ENCODE measurements at regions of chr9 and their contacts with region 1.

Region 1: GRCh38 chr9:104927912-104928740 is at the start of gene ABCA1:
- DNase-seq: peak; percentile 77
- H3K4me3 ChIP-seq: peak within 1 kb of the TSS; percentile 96
- H3K27ac ChIP-seq: peak within 1 kb of the TSS; percentile 84
- H3K4me1 ChIP-seq: peaks cover 28% of the 10 kb centered on the region
- H3K27me3 ChIP-seq: no peaks in the 10 kb centered on the region
- CTCF ChIP-seq: no peak
- total RNA-seq, gene ABCA1: 22.4 and 38.3 TPM in 2 replicates

Region 2: GRCh38 chr9:103894184-103894583 is 1033.9 kb before region 1 on chr9:
- CTCF ChIA-PET with region 1: no interaction called
- POLR2A ChIA-PET with region 1: interaction called, 11 read pairs
- intact Hi-C with region 1: no loop called
- DNase-seq: no peak
- H3K4me3 ChIP-seq: no peak overlapping the region
- H3K27ac ChIP-seq: no peak overlapping the region
- H3K4me1 ChIP-seq: no peaks in the 10 kb centered on the region
- H3K27me3 ChIP-seq: no peaks in the 10 kb centered on the region
- CTCF ChIP-seq: no peak

Region 3: DNA sequence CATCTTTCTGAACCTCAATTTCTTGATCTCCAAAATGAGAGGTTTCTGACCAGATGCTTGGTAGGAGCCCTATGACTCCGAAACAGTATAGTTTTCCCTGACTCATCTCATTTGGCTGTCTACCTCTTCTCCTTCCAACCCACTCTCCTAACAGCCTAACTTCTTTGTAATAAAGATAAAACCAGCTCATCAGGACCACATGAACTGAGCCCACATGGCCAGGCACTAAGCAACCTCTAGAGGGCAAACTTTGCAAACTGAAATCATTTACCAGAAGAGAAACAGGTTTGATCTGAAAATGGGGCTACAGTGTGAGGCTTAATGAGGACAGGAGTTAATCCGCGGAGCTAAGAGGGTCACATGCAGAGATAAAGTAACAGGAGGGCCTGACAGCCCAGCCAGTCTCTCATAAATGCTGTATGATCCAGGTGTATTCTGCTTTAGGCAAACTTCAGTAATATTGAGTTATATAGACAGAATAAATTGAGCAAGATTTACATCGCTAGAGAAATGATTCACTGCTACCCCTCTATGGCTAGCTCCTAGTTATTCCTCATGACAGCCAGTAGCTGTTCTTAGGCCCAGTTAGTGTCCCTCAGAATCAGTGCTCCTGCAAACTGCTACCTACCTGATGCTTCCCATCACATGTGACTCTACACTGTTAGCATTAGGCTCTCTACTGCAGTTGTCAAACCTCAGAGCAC is 64.8 kb before region 1 on chr9:
- CTCF ChIA-PET with region 1: interaction called, 7 read pairs
- POLR2A ChIA-PET with region 1: no interaction called
- intact Hi-C with region 1: loop called (anchors 1 kb)
- DNase-seq: peak; percentile 56
- H3K4me3 ChIP-seq: no peak overlapping the region
- H3K27ac ChIP-seq: peak overlapping the region; percentile 21; the same call in 1 of the 2 replicates
- H3K4me1 ChIP-seq: peaks cover 50% of the 10 kb centered on the region
- H3K27me3 ChIP-seq: no peaks in the 10 kb centered on the region
- CTCF ChIP-seq: peak; percentile 84

Region 4: GRCh38 chr9:104991144-104991953 is 63.2 kb after region 1 on chr9:
- CTCF ChIA-PET with region 1: interaction called, 14 read pairs
- POLR2A ChIA-PET with region 1: interaction called, 11 read pairs
- intact Hi-C with region 1: loop called (anchors 1 kb)
- DNase-seq: peak; percentile 75 to 88
- H3K4me3 ChIP-seq: peak overlapping the region; percentile 84
- H3K27ac ChIP-seq: peak overlapping the region; percentile 99
- H3K4me1 ChIP-seq: peaks cover 52% of the 10 kb centered on the region
- H3K27me3 ChIP-seq: no peaks in the 10 kb centered on the region
- CTCF ChIP-seq: no peak

Region 5: DNA sequence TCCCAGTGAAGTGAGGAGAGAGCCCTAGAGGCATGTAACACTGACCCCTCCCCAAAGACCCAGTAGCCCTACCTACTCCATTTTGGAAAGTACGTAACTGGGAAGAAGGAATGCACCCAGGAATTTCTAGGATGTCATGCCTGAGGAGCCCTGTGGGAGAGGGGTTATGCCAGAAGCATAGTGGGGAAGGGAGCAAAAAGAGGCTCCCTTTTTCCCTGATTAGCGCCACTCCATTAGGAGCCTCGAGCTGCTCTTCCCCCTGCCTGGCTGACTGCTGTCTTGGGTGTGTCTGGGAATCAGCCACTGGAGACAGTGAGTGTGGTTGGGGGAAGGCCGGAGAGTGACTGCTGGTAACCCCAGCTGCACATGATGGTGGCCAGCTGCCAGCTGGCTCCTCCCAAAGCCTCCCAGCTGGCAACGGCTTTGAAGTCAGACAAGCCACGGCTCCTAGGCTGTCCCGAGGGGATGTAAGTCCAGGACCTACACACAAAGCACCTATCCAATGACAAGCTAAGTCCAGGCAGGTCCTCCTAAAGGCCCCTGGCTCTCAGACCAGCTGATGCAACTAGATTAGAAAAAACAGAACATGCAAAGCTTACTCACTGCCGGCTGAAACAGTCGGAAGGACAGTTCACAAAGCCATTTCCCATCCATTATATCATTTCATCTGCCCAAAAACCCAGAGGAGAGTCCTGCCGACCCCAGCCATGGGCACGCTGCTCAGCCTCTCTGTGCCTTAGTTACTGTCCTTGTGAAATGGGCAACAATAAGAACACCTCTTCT is 136.4 kb after region 1 on chr9:
- CTCF ChIA-PET with region 1: interaction called, 3 read pairs
- POLR2A ChIA-PET with region 1: no interaction called
- intact Hi-C with region 1: loop called (anchors 2 kb)
- DNase-seq: peak; percentile 93 to 94
- H3K4me3 ChIP-seq: peak overlapping the region; percentile 36; the same call in 1 of the 2 replicates
- H3K27ac ChIP-seq: peak overlapping the region; percentile 97
- H3K4me1 ChIP-seq: peaks cover 43% of the 10 kb centered on the region
- H3K27me3 ChIP-seq: no peaks in the 10 kb centered on the region
- CTCF ChIP-seq: no peak

Region 6: GRCh38 chr9:105127863-105128220 is 199.7 kb after region 1 on chr9:
- CTCF ChIA-PET with region 1: interaction called, 3 read pairs
- POLR2A ChIA-PET with region 1: no interaction called
- intact Hi-C with region 1: loop called (anchors 2 kb)
- DNase-seq: peak; percentile 36 to 74
- H3K4me3 ChIP-seq: no peak overlapping the region
- H3K27ac ChIP-seq: peak overlapping the region; percentile 70
- H3K4me1 ChIP-seq: peaks cover 35% of the 10 kb centered on the region
- H3K27me3 ChIP-seq: no peaks in the 10 kb centered on the region
- CTCF ChIP-seq: no peak

Region 7: DNA sequence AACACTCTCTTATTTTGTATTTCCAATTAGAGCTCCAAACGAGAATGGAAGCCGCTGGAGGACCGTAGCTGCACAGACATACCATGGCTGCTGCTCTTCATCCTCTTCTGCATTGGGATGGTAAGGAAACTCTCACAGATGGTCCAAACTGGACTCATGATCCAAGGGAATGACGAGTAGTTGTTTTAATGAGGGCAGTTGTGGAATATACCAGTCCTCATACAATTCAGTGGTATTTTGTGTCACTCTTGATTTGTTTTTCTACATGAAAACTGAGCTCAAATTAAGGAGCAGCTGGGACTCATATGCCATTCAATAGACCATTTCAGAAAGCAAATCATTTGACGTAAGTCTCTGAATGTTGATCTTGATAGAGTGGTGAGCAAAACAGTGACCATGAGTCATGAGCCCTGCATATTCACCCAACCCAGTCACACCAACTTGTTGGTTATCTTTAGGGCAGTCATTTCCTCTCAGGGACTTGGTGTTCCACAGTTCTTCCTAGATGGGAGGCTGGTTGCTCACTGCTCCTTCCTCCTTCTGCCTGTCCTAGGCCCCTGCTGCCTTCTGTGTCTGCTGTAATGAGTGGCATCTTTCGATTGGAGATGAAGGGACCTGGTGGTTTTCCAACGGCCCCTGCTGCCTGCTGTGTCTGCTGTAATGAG is 371.2 kb after region 1 on chr9:
- CTCF ChIA-PET with region 1: interaction called, 3 read pairs
- POLR2A ChIA-PET with region 1: no interaction called
- intact Hi-C with region 1: loop called (anchors 2 kb)
- DNase-seq: peak; percentile 56 to 70
- H3K4me3 ChIP-seq: no peak overlapping the region
- H3K27ac ChIP-seq: peak overlapping the region; percentile 56
- H3K4me1 ChIP-seq: peaks cover 50% of the 10 kb centered on the region
- H3K27me3 ChIP-seq: no peaks in the 10 kb centered on the region
- CTCF ChIP-seq: no peak